Activated CD8-positive, alpha-beta T cell treated with anti-CD3 and anti-CD28 coated beads, Interleukin-2, amount 10 ng/mL, durations not matched to agents 7 days and 5 days (primary cell): ENCODE measurements at regions of chr1 and their contacts with region 1.

Region 1: DNA sequence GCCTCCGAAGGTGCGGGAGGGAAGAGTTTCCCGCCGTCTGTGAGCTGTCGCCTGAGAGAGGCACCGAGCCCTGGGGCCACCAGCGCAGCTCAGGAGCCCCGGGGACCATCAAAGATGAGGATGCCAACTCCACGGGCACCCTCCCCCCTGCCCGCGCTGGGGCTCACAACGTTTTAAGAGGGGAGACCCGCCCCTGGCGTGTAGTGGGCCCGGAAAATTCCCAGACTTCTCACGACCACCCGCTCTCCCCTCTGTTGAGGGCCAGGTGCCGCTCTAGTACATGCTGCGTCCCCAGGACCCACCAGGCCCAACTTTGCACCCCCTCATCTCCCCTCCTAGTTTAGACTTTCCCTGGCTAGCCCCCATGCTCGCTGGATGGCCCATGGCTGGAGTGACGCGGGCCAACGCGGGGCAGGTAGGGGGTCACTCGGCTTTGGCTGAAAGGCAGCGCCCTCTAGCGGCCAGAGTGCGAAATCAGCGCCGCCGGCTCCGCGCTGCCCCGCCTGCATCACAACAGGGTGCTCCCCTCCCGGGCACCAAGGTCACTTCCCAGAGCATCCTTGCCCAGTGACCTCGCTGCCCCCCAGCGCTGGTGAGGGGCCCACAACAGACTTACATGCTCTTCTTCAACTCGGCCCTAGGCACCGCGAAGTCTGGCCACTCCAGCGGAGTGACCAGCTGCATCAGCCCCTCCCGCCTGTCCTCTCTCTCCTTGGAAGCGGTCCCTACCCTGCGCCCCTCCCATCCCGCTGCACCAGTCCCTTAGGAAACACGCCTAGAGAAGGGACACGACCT is 1.8 kb downstream of the CD160 start:
- DNase-seq: peak; percentile 83
- ATAC-seq: peak; percentile 94
- H3K4me3 Mint-ChIP-seq: peak overlapping the region; percentile 70
- H3K27ac Mint-ChIP-seq: peak overlapping the region; percentile 74
- H3K4me1 Mint-ChIP-seq: peaks cover 45% of the 10 kb centered on the region
- H3K27me3 Mint-ChIP-seq: peaks cover 7% of the 10 kb centered on the region

Region 2: GRCh38 chr1:145545055-145545454 is 176.0 kb before region 1 on chr1:
- CTCF ChIA-PET with region 1: no interaction called
- POLR2A ChIA-PET with region 1: no interaction called
- DNase-seq: no peak
- ATAC-seq: no peak
- H3K4me3 Mint-ChIP-seq: no peak overlapping the region
- H3K27ac Mint-ChIP-seq: no peak overlapping the region
- H3K4me1 Mint-ChIP-seq: no peaks in the 10 kb centered on the region
- H3K27me3 Mint-ChIP-seq: peaks cover 27% of the 10 kb centered on the region

Region 3: GRCh38 chr1:145690624-145691035 is 30.4 kb before region 1 on chr1:
- CTCF ChIA-PET with region 1: interaction called, 18 read pairs
- POLR2A ChIA-PET with region 1: no interaction called
- DNase-seq: peak; percentile 76
- ATAC-seq: peak; percentile 97
- H3K4me3 Mint-ChIP-seq: peak overlapping the region; percentile 32
- H3K27ac Mint-ChIP-seq: peak overlapping the region; percentile 79
- H3K4me1 Mint-ChIP-seq: peaks cover 42% of the 10 kb centered on the region
- H3K27me3 Mint-ChIP-seq: no peaks in the 10 kb centered on the region

Region 4: DNA sequence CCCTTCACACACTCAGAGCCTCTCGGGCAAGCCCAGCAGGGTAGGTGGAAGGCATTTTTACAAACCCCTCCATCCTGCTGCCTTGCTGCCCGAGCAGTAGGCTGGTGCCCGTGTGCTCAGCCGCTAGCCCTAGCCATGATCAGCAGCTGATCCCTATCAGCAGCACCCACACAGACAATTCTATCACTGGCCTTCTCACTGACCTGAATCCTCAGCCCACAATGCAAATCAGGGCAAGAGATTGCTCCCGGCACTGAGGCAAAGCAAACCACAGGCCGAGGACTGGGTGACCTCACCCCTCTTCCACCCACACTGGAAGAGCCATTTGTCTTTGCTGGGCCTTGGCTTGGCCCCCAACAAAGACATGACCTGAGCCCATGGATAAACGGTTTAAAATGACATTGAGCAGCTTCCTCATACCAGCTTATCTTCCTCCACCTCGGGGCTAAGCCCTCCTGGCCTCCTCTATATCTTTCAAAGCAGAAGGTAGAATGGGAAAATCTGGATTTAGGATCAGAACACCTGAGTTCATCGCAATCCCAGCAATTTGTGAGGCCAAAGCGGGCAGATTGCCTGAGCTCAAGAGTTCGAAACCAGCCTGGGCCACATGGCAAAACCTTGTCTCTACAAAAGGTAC is 12.9 kb before region 1 on chr1:
- CTCF ChIA-PET with region 1: interaction called, 10 read pairs
- POLR2A ChIA-PET with region 1: no interaction called
- DNase-seq: no peak
- ATAC-seq: no peak
- H3K4me3 Mint-ChIP-seq: no peak overlapping the region
- H3K27ac Mint-ChIP-seq: no peak overlapping the region
- H3K4me1 Mint-ChIP-seq: no peaks in the 10 kb centered on the region
- H3K27me3 Mint-ChIP-seq: peaks cover 14% of the 10 kb centered on the region

Region 5: DNA sequence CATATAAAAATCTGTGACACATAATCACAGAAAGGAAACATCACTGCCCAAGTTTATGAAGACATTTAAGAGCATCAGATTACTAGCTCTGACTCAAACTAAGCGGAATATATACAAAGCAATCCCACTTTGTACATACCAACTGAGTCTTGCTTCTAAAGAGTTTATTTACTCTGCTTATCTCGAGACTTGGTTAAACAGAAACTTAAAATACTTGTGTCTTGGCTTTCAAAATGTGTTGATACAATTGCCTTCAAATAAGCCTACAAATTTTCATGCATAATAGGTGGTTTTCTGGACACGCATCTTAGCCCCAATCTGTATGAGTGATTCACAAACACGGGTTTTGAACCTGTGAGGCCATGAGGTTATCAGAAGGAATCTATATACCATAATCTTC is 19.2 kb after region 1 on chr1:
- CTCF ChIA-PET with region 1: interaction called, 16 read pairs
- POLR2A ChIA-PET with region 1: no interaction called
- DNase-seq: no peak
- ATAC-seq: no peak
- H3K4me3 Mint-ChIP-seq: no peak overlapping the region
- H3K27ac Mint-ChIP-seq: no peak overlapping the region
- H3K4me1 Mint-ChIP-seq: no peaks in the 10 kb centered on the region
- H3K27me3 Mint-ChIP-seq: no peaks in the 10 kb centered on the region

Region 6: DNA sequence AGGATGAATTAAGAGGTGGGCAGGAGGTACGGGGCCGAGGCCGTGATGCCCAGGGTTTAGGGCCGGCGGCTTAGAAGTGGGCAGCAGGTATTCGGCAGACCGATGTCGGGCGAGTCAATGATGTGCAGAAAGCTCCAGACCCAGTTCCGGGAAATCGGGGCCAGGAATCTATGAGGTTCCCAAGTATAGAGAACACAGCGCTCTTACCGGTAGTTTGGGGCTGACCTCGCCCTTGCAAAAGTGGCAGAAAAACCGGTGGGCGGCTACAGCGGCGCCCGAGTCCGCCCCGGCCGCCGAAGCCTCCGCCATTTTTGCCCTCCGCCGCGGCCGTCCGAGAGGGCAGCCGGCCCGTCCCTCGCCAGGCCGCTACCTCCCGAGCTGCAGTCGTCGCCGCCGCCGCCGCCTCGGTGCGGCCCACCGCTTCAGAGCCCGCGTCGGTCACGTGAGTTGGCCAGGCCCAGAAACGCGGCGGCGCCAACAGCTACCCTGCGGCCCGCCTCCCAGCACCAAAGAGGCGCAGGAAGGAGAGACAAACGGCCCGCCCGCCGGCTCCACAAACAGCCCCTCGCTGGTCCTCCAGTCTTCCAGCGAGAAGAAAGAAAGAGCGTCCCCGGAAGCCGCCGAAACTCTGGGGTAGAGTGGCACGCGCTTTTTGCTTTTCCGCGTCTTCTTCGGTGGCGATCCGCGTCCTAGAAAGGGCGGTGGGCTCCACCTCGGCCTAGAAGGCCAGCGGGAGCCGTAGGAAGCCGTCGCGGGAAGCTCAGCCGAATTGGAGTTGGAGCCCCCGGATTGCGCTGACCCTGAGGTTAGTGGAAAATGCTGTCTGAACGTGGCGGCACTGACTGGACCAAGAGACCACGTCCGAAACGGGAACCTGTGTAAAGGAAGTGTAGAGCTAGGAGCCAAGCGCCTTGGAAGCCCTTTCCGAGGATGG is 102.8 kb after region 1 on chr1 and contains the starts of genes POLR3C and RNF115:
- CTCF ChIA-PET with region 1: interaction called, 13 read pairs
- POLR2A ChIA-PET with region 1: no interaction called
- DNase-seq: peak; percentile 94
- ATAC-seq: peak; percentile 95
- H3K4me3 Mint-ChIP-seq: peak within 1 kb of the TSS; percentile 97
- H3K27ac Mint-ChIP-seq: peak within 1 kb of the TSS; percentile 94
- H3K4me1 Mint-ChIP-seq: peaks cover 33% of the 10 kb centered on the region
- H3K27me3 Mint-ChIP-seq: no peaks in the 10 kb centered on the region
- total RNA-seq, gene POLR3C: 29.7 to 31.5 TPM
- total RNA-seq, gene RNF115: 15.1 to 15.5 TPM

Region 7: GRCh38 chr1:145985502-145986439 is 264.7 kb after region 1 on chr1:
- CTCF ChIA-PET with region 1: no interaction called
- POLR2A ChIA-PET with region 1: no interaction called
- DNase-seq: no peak
- ATAC-seq: no peak
- H3K4me3 Mint-ChIP-seq: no peak overlapping the region
- H3K27ac Mint-ChIP-seq: peak overlapping the region; percentile 67
- H3K4me1 Mint-ChIP-seq: peaks cover 54% of the 10 kb centered on the region
- H3K27me3 Mint-ChIP-seq: no peaks in the 10 kb centered on the region